Activated B cell treated with CpG ODN at 0.5 μM for 24 hours (primary cell): ENCODE measurements at regions of chr14 and their contacts with region 1.

Region 1: DNA sequence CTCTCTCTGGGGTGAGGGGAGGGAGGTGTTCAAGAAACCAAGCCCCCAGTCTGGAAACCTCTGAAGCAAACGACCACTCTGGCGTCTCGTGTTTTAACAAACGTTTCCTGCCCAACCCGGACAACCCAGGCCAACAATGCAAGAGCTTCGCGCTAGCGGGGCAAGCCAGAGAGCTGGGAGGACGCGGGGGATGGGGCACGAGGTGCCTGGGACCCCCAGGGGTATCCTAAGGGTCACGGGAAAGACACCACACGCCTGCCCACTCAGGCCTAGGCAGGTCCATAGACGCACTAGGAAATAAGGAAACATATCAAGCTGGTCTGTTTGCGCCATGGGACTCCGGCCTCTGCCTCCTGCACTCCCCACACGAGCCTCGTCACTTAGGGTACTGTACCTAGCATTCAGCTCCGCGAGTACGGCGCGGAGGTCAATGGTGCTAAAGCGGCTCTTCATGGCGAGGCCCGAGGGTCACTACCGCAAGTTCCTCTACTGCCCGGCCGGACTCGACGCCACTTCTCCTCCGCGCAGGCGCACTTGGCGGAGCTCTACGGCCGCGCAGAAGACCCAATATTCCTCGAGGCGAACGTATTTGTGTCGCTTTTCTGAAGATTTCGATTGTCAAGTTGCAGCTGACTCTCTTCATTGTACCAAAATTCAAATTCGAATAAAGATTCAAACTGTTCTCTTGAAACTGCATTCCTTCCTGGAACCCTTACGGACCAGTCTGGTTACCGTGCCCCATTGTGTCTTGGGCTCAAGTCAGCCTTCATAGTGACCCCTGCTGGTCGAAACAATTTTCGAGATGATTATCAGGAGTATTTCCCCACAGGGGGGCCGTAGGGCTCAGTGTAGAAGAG is at the start of gene NEMF:
- DNase-seq: peak; percentile 78
- ATAC-seq: peak; percentile 83
- H3K4me3 Mint-ChIP-seq: peak within 1 kb of the TSS; percentile 99
- H3K27ac Mint-ChIP-seq: peak within 1 kb of the TSS; percentile 98
- H3K4me1 Mint-ChIP-seq: peaks cover 47% of the 10 kb centered on the region
- H3K27me3 Mint-ChIP-seq: no peaks in the 10 kb centered on the region
- CTCF ChIP-seq: peak; percentile 27
- total RNA-seq, gene NEMF: 99.1 and 110 TPM in 2 replicates

Region 2: GRCh38 chr14:49598485-49599300 is 253.8 kb before region 1 on chr14 and contains the start of gene LRR1:
- CTCF ChIA-PET with region 1: no interaction called
- POLR2A ChIA-PET with region 1: interaction called, 12 read pairs
- intact Hi-C with region 1: no loop called
- DNase-seq: peak; percentile 94
- ATAC-seq: peak; percentile 67
- H3K4me3 Mint-ChIP-seq: peak within 1 kb of the TSS; percentile 95
- H3K27ac Mint-ChIP-seq: peak within 1 kb of the TSS; percentile 96
- H3K4me1 Mint-ChIP-seq: peaks cover 60% of the 10 kb centered on the region
- H3K27me3 Mint-ChIP-seq: no peaks in the 10 kb centered on the region
- CTCF ChIP-seq: no peak
- total RNA-seq, gene LRR1: 15.1 and 19.9 TPM in 2 replicates

Region 3: GRCh38 chr14:49767562-49768300 is 84.8 kb before region 1 on chr14 and contains the start of gene KLHDC2:
- CTCF ChIA-PET with region 1: interaction called, 5 read pairs
- POLR2A ChIA-PET with region 1: interaction called, 18 read pairs
- intact Hi-C with region 1: loop called (anchors 1 kb)
- DNase-seq: peak; percentile 86
- ATAC-seq: peak; percentile 88
- H3K4me3 Mint-ChIP-seq: peak within 1 kb of the TSS; percentile 97
- H3K27ac Mint-ChIP-seq: peak within 1 kb of the TSS; percentile 99
- H3K4me1 Mint-ChIP-seq: peaks cover 33% of the 10 kb centered on the region
- H3K27me3 Mint-ChIP-seq: no peaks in the 10 kb centered on the region
- CTCF ChIP-seq: no peak
- total RNA-seq, gene KLHDC2: 27.0 and 31.2 TPM in 2 replicates

Region 4: DNA sequence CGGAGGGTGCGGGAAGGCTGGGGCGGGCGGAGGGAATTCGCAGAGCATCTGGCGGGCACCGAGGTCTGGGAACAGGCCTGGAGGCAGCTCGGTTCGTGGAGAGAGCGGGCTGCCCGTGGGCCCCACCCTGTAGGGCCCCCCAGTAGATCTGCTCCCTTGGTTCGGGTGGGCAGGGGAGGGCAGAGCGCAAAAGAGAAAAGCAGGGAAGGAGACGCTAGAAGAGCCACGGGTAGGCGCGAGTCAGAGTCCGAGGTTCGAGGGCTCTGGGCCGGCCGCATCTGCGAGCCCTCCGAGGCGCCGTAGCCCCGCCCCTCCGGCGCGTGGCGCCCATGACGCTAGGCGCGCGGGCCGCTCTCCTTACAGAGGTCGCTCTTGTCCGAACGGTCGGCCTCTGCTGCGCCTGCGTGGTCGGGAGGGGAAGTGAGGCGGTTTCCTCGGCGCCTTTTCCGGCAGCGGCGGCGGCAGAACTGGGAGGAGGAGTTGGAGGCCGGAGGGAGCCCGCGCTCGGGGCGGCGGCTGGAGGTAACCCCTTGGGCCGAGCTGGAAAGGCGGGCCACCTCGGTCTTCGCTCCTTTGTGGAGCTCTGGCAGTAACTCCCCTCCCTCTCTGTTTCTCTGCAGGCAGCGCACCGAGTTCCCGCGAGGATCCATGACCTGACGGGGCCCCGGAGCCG is 40.2 kb after region 1 on chr14 and contains the start of gene ARF6:
- CTCF ChIA-PET with region 1: interaction called, 3 read pairs
- POLR2A ChIA-PET with region 1: interaction called, 19 read pairs
- intact Hi-C with region 1: loop called (anchors 1 kb)
- DNase-seq: peak; percentile 98
- ATAC-seq: peak; percentile 85
- H3K4me3 Mint-ChIP-seq: peak within 1 kb of the TSS; percentile 96
- H3K27ac Mint-ChIP-seq: peak within 1 kb of the TSS; percentile 98
- H3K4me1 Mint-ChIP-seq: peaks cover 38% of the 10 kb centered on the region
- H3K27me3 Mint-ChIP-seq: no peaks in the 10 kb centered on the region
- CTCF ChIP-seq: no peak
- total RNA-seq, gene ARF6: 136 and 142 TPM in 2 replicates

Region 5: GRCh38 chr14:50099335-50099734 is 246.8 kb after region 1 on chr14:
- CTCF ChIA-PET with region 1: interaction called, 17 read pairs
- POLR2A ChIA-PET with region 1: interaction called, 26 read pairs
- intact Hi-C with region 1: no loop called
- DNase-seq: no peak
- ATAC-seq: no peak
- H3K4me3 Mint-ChIP-seq: no peak overlapping the region
- H3K27ac Mint-ChIP-seq: peak overlapping the region; percentile 62
- H3K4me1 Mint-ChIP-seq: peaks cover 74% of the 10 kb centered on the region
- H3K27me3 Mint-ChIP-seq: no peaks in the 10 kb centered on the region
- CTCF ChIP-seq: no peak

Region 6: GRCh38 chr14:50231475-50232275 is 379.1 kb after region 1 on chr14 and contains the start of gene SOS2:
- CTCF ChIA-PET with region 1: no interaction called
- POLR2A ChIA-PET with region 1: interaction called, 8 read pairs
- intact Hi-C with region 1: loop called (anchors 2 kb)
- DNase-seq: peak; percentile 87
- ATAC-seq: peak; percentile 87
- H3K4me3 Mint-ChIP-seq: peak within 1 kb of the TSS; percentile 93
- H3K27ac Mint-ChIP-seq: peak within 1 kb of the TSS; percentile 92
- H3K4me1 Mint-ChIP-seq: peaks cover 35% of the 10 kb centered on the region
- H3K27me3 Mint-ChIP-seq: no peaks in the 10 kb centered on the region
- CTCF ChIP-seq: no peak
- total RNA-seq, gene SOS2: 29.1 and 32.0 TPM in 2 replicates

Region 7: DNA sequence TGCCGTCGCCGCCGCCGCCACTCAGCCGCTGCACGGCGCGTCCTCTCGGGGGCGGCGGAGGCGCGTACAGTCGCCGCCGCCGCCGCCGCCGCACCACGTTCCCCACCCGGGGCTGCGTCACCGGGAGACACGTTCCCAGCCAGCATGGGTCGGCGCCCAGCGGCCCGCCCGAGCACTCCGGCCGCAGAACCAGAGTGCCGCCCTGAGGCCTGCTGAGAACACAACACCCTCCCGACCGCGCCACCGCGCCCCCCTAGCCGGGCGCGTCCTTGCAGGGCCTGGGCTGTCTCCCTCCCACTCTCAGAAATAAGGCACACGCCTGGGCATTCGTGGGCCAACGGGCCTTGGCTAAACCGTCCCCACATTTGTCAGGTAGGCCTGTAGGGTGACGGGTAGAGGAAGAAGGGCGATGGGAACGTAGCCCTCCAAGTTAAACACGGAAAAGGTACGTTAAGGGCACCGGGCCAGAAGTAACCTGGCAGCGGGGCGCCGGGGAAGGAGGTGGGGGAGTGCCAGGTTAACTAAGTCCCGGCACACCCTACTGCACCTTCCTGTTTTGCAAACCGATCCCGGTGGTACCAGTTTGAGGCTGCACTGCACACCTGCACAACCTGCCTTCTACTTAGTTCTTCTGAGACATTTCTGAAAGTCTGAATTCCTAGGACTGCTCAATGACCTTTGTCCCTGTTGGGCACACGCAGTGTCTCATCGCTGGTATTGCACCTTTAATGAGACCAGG is 680.1 kb after region 1 on chr14 and contains the start of gene MAP4K5:
- CTCF ChIA-PET with region 1: no interaction called
- POLR2A ChIA-PET with region 1: interaction called, 3 read pairs
- intact Hi-C with region 1: loop called (anchors 1 kb)
- DNase-seq: peak; percentile 83
- ATAC-seq: peak; percentile 94
- H3K4me3 Mint-ChIP-seq: peak within 1 kb of the TSS; percentile 84
- H3K27ac Mint-ChIP-seq: peak within 1 kb of the TSS; percentile 88
- H3K4me1 Mint-ChIP-seq: peaks cover 47% of the 10 kb centered on the region
- H3K27me3 Mint-ChIP-seq: no peaks in the 10 kb centered on the region
- CTCF ChIP-seq: no peak
- total RNA-seq, gene MAP4K5: 32.5 and 34.1 TPM in 2 replicates